Activated B cell treated with CpG ODN at 0.5 μM for 24 hours (primary cell): ENCODE measurements at regions of chr20 and their contacts with region 1.

Region 1: GRCh38 chr20:51456511-51457509 is 85.7 kb downstream of the NFATC2 start:
- DNase-seq: peak; percentile 36
- ATAC-seq: peak; percentile 43
- H3K4me3 Mint-ChIP-seq: peak overlapping the region; percentile 59
- H3K27ac Mint-ChIP-seq: peak overlapping the region; percentile 79
- H3K4me1 Mint-ChIP-seq: peaks cover 64% of the 10 kb centered on the region
- H3K27me3 Mint-ChIP-seq: no peaks in the 10 kb centered on the region
- CTCF ChIP-seq: no peak

Region 2: GRCh38 chr20:51385646-51386530 is 70.9 kb before region 1 on chr20:
- CTCF ChIA-PET with region 1: interaction called, 8 read pairs
- POLR2A ChIA-PET with region 1: interaction called, 8 read pairs
- intact Hi-C with region 1: loop called (anchors 5 kb)
- DNase-seq: no peak
- ATAC-seq: peak; percentile 65
- H3K4me3 Mint-ChIP-seq: no peak overlapping the region
- H3K27ac Mint-ChIP-seq: peak overlapping the region; percentile 62
- H3K4me1 Mint-ChIP-seq: peaks cover 42% of the 10 kb centered on the region
- H3K27me3 Mint-ChIP-seq: no peaks in the 10 kb centered on the region
- CTCF ChIP-seq: no peak

Region 3: GRCh38 chr20:51423290-51423667 is 33.5 kb before region 1 on chr20:
- CTCF ChIA-PET with region 1: interaction called, 4 read pairs
- POLR2A ChIA-PET with region 1: interaction called, 12 read pairs
- intact Hi-C with region 1: loop called (anchors 2 kb)
- DNase-seq: no peak
- ATAC-seq: peak; percentile 70
- H3K4me3 Mint-ChIP-seq: peak overlapping the region; percentile 4
- H3K27ac Mint-ChIP-seq: peak overlapping the region; percentile 82
- H3K4me1 Mint-ChIP-seq: peaks cover 65% of the 10 kb centered on the region
- H3K27me3 Mint-ChIP-seq: no peaks in the 10 kb centered on the region
- CTCF ChIP-seq: no peak

Region 4: GRCh38 chr20:51494241-51495120 is 37.7 kb after region 1 on chr20:
- CTCF ChIA-PET with region 1: interaction called, 3 read pairs
- POLR2A ChIA-PET with region 1: interaction called, 27 read pairs
- intact Hi-C with region 1: loop called (anchors 1 kb)
- DNase-seq: no peak
- ATAC-seq: no peak
- H3K4me3 Mint-ChIP-seq: peak overlapping the region; percentile 32
- H3K27ac Mint-ChIP-seq: peak overlapping the region; percentile 46
- H3K4me1 Mint-ChIP-seq: peaks cover 88% of the 10 kb centered on the region
- H3K27me3 Mint-ChIP-seq: no peaks in the 10 kb centered on the region
- CTCF ChIP-seq: no peak

Region 5: GRCh38 chr20:51525241-51526129 is 68.7 kb after region 1 on chr20:
- CTCF ChIA-PET with region 1: no interaction called
- POLR2A ChIA-PET with region 1: interaction called, 4 read pairs
- intact Hi-C with region 1: loop called (anchors 1 kb)
- DNase-seq: peak; percentile 31
- ATAC-seq: peak; percentile 53
- H3K4me3 Mint-ChIP-seq: peak overlapping the region; percentile 58
- H3K27ac Mint-ChIP-seq: peak overlapping the region; percentile 82
- H3K4me1 Mint-ChIP-seq: peaks cover 77% of the 10 kb centered on the region
- H3K27me3 Mint-ChIP-seq: no peaks in the 10 kb centered on the region
- CTCF ChIP-seq: no peak